SK-N-SH (cell line): ENCODE measurements at regions of chr3 and their contacts with region 1.

Region 1: DNA sequence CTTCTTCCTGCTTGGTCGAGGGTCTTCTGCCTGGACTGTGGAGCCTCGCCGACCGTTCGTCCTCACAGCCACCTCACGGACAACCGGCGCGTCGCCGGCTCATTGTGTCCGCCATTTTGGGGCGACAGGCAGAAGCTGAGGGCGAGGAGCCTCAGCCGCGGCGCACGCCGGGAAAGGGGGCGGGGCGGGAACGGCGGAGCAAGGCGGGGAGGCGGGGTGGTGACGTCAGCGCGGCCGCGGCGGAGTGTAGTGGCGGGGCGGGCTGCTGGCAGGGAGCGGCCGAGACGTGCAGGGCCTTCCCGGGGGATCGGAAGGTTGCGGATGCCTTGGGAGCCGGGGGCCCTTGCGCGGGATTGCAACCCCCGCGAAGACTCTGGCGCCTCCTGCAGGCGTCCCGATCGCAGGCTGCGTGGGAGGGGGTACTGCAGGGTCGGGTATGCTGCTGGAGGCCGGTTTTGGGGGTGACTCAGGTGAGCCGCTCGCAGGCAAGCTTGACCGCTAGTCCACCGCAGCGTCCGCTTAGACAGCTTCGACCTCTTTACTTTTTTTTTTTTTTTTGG is at the start of gene WDR82:
- DNase-seq: peak; percentile 98
- H3K4me3 ChIP-seq: peak within 1 kb of the TSS; percentile 71 to 92
- H3K27ac ChIP-seq: peak within 1 kb of the TSS; percentile 90 to 97
- H3K4me1 ChIP-seq: peaks cover 11 to 20% of the 10 kb centered on the region in 2 experiments; a peak in 3 of 4 replicates
- H3K27me3 ChIP-seq: no peaks in the 10 kb centered on the region
- CTCF ChIP-seq: peak; percentile 61
- EP300 ChIP-seq: no peak
- RAD21 ChIP-seq: peak; percentile 38
- polyA plus RNA-seq, gene WDR82: 41.2 and 57.8 TPM in 2 replicates

Region 2: DNA sequence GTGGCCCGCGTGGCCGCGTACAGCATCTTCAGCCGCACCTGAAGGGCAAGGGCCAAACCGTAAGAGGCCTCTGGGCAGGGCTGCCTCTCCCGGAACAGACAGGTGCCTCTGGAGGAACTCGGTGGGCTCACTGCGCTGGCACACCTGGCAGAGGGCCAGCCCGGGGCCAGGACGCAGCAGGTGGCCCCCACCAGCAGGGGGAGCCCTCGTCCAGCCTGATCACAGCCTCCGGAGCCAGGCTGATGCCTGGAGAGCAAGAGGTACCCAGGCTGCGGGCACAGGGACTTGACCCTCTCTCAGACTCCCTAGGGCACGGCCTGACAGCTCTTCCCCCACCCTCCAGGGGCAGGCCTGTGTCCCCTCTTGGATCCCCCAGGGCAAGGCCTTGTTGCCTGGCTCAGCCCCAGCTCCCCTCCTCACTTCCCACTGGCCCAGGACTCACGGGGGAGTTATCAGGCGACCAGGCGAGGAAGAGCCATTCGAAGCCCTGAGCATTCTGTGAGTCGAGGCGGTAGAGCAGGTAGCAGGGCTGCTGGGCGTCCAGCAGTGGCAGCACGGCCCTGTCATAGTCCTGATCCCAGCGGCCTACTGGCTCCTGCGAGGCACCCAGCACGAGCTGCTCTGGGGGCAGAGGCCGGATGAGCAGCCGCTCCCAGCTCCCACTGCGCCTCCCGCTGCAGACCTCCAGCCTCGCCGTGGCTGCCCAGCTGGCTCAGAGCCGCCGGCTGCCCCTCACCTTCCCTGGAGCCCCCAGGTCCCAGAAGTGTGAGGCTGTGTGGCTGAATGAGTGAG is 46.9 kb before region 1 on chr3:
- CTCF ChIA-PET with region 1: interaction called, 63 read pairs
- POLR2A ChIA-PET with region 1: interaction called, 67 read pairs
- DNase-seq: peak; percentile 90
- H3K4me3 ChIP-seq: no peak overlapping the region
- H3K27ac ChIP-seq: no peak overlapping the region
- H3K4me1 ChIP-seq: peaks cover 2 to 15% of the 10 kb centered on the region in 2 experiments; a peak in 3 of 4 replicates
- H3K27me3 ChIP-seq: no peaks in the 10 kb centered on the region
- CTCF ChIP-seq: peak; percentile 75
- EP300 ChIP-seq: no peak
- RAD21 ChIP-seq: peak; percentile 62

Region 3: DNA sequence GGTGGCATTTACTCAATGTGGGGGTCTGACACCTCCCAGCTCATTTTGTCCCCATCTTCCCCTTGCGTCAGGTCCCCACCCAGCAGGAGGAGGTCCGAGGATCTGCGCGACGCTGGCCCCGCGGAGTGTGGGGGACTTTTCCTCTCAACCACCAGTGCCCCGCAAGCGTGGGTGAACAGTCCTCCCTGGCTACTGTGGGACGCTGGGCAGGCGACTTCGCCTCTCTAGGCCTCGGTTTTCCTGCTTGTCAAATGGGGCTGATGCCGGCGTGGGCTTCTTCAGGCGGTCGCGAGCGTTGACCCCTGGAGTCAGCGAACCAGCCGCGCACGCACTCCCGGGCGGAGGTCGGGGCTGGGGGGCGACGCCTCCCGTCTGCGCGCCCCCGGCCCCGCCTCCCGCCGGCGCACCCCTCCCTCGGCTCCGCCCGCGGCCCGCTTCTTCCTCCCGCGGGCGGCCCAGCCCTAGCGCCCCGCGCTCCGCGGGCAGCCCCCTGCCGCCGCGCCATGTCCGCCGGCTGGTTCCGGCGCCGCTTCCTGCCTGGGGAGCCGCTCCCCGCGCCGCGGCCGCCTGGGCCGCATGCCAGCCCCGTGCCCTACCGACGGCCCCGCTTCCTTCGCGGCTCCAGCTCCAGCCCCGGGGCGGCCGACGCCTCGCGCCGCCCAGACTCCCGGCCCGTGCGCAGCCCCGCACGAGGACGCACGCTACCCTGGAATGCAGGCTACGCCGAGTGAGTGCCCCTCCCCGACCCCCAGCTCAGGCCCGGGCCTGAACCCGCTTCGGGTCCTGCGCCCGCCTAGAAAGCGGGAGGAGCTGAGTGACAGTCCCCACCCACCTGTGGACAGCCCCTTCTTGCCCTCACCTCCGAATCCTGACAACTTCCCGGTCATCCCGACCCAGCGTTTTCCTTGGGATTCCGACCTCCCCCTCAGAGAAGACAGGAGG is 33.0 kb before region 1 on chr3 and contains the start of gene PPM1M:
- CTCF ChIA-PET with region 1: interaction called, 63 read pairs
- POLR2A ChIA-PET with region 1: interaction called, 67 read pairs
- DNase-seq: peak; percentile 90
- H3K4me3 ChIP-seq: peak within 1 kb of the TSS; percentile 57 to 60
- H3K27ac ChIP-seq: peak within 1 kb of the TSS; percentile 30 to 73; a peak in 3 of 4 replicates
- H3K4me1 ChIP-seq: peaks cover 4 to 43% of the 10 kb centered on the region in 2 experiments; a peak in 3 of 4 replicates
- H3K27me3 ChIP-seq: no peaks in the 10 kb centered on the region
- CTCF ChIP-seq: no peak
- EP300 ChIP-seq: no peak
- RAD21 ChIP-seq: no peak
- polyA plus RNA-seq, gene PPM1M: 19.2 and 23.9 TPM in 2 replicates

Region 4: DNA sequence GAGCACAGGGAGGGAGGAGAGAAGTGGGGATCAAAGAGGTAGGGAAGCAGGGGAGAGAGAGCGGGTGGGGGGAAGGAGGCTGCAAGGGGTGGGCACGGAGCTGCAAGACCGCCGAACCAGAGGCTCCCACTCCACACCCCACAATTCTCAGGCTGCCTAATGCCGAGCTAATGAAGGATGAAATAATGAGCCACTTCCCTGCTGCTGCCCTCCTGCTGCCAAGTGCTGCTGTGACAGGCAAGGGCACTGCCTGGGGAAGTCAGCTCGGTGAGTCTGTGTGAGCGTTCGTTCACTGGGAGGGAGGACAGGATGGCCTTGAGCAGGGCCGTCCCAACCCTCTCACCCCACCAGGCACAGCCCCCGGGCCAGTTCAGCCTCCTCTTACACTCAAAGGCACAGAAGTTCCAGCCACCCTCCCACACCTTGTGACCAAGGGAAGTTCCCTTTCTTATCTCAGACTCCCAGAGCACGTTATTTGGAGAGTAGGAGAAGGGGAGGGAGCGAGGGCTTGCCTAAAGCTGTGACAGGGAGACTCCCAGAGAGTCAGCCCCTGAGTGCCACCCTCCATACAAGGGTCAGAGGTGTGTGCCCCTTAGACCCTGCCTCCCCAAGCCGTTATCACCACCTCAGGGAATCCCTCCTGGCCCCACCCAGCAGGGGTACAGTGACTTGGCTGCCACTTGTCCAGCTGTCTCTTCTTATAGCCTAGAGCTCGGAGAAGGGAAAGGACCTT is 21.5 kb after region 1 on chr3:
- CTCF ChIA-PET with region 1: interaction called, 3 read pairs
- POLR2A ChIA-PET with region 1: interaction called, 16 read pairs
- DNase-seq: peak; percentile 76
- H3K4me3 ChIP-seq: no peak overlapping the region
- H3K27ac ChIP-seq: peak overlapping the region; percentile 60 to 91
- H3K4me1 ChIP-seq: peaks cover 17 to 75% of the 10 kb centered on the region in 2 experiments; a peak in 2 of 4 replicates
- H3K27me3 ChIP-seq: no peaks in the 10 kb centered on the region
- CTCF ChIP-seq: peak; percentile 28; the same call in 1 of the 2 replicates
- EP300 ChIP-seq: no peak
- RAD21 ChIP-seq: 0 out of 2 replicates have a peak, but pooled peaks have one; percentile 28